ENCODE measurements at regions of chr2 and their contacts with region 1.

Region 1: GRCh38 chr2:114283774-114284173 is 158.7 kb upstream of the DPP10 start:
- DNase-seq: no peak
- ATAC-seq: peak; percentile 56
- H3K4me3 ChIP-seq: no peak overlapping the region
- H3K27ac ChIP-seq: peak overlapping the region; percentile 21 to 57
- H3K4me1 ChIP-seq: peaks cover 2 to 7% of the 10 kb centered on the region in 2 donors
- H3K27me3 ChIP-seq: no peaks in the 10 kb centered on the region

Region 2: GRCh38 chr2:114127370-114127769 is 156.4 kb before region 1 on chr2:
- intact Hi-C with region 1: no loop called
- DNase-seq: no peak
- ATAC-seq: no peak
- H3K4me3 ChIP-seq: no peak overlapping the region
- H3K27ac ChIP-seq: no peak overlapping the region
- H3K4me1 ChIP-seq: no peaks in the 10 kb centered on the region
- H3K27me3 ChIP-seq: no peaks in the 10 kb centered on the region

Region 3: DNA sequence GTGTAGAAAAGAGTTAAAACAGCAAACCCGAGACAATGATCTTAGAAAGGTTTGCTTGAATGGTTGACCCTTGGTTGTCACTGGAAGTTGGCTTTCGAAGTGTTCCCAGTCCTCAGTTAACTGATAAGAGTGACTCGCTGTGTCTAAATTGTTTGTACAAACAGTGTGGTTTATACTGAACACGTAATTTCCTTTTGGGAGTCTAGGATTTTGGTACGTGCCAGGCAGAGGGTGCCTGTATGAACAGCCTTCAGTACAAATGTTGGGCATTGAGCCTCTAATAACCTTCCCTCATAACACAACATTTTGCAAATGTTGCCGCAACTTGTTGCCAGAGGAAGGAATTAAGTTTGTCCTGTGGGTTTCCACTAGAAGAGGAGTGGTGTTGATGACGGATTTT is 62.9 kb after region 1 on chr2:
- intact Hi-C with region 1: loop called in 1 of 2 experiments (anchors 5 kb)
- DNase-seq: peak in 1 of 2 donors; percentile 50
- ATAC-seq: peak; percentile 56
- H3K4me3 ChIP-seq: no peak overlapping the region
- H3K27ac ChIP-seq: peak overlapping the region; percentile 23 to 65
- H3K4me1 ChIP-seq: no peaks in the 10 kb centered on the region
- H3K27me3 ChIP-seq: no peaks in the 10 kb centered on the region

Region 4: GRCh38 chr2:114515882-114516281 is 232.1 kb after region 1 on chr2:
- intact Hi-C with region 1: no loop called
- DNase-seq: no peak
- ATAC-seq: no peak
- H3K4me3 ChIP-seq: no peak overlapping the region
- H3K27ac ChIP-seq: no peak overlapping the region
- H3K4me1 ChIP-seq: peaks cover 0 to 4% of the 10 kb centered on the region in 2 donors
- H3K27me3 ChIP-seq: no peaks in the 10 kb centered on the region

Region 5: DNA sequence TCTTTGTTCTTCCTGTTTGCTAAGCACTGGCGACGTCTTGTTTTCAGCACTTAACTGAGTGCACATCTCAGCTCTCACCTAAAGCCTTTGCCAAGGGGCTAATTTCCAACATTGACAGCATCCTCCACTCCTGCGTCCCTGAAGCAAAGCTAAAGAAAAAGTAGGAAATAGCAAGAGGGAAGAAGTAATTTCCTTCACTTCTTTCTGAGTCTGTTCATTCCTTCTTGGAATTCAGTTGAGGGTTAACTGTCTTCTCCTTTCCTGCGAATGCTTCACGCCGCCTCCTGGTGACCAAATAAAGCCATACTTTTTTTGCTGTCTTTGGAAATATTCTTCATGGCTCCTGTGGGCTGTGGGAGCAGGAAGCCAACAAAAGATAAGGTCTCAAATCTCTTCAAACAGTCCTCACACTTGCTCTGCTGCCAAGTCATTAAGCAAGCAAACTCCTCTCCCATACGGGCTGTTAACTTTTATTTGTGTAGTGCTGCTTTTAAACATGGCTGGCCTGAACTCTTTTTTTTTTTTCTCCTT is 259.5 kb after region 1 on chr2:
- intact Hi-C with region 1: loop called in 1 of 2 experiments (anchors 2 kb)
- DNase-seq: peak in 1 of 2 donors; percentile 61
- ATAC-seq: peak; percentile 87
- H3K4me3 ChIP-seq: peak overlapping the region in 1 of 2 donors; percentile 11
- H3K27ac ChIP-seq: peak overlapping the region; percentile 67 to 77
- H3K4me1 ChIP-seq: no peaks in the 10 kb centered on the region
- H3K27me3 ChIP-seq: no peaks in the 10 kb centered on the region

Measured in aorta (tissue), 5 donors.